Posterior cingulate gyrus (tissue), 11 donors: ENCODE measurements at regions of chr9 and their contacts with region 1.

Region 1: GRCh38 chr9:469672-470551 is 255.2 kb downstream of the DOCK8 start:
- DNase-seq: peak; percentile 47 to 96 (median 84)

Region 2: GRCh38 chr9:394347-395052 is 75.4 kb before region 1 on chr9:
- intact Hi-C with region 1: no loop called
- DNase-seq: no peak

Region 3: GRCh38 chr9:406886-407654 is 62.8 kb before region 1 on chr9:
- intact Hi-C with region 1: loop called (anchors 10 kb)
- DNase-seq: no peak

Region 4: DNA sequence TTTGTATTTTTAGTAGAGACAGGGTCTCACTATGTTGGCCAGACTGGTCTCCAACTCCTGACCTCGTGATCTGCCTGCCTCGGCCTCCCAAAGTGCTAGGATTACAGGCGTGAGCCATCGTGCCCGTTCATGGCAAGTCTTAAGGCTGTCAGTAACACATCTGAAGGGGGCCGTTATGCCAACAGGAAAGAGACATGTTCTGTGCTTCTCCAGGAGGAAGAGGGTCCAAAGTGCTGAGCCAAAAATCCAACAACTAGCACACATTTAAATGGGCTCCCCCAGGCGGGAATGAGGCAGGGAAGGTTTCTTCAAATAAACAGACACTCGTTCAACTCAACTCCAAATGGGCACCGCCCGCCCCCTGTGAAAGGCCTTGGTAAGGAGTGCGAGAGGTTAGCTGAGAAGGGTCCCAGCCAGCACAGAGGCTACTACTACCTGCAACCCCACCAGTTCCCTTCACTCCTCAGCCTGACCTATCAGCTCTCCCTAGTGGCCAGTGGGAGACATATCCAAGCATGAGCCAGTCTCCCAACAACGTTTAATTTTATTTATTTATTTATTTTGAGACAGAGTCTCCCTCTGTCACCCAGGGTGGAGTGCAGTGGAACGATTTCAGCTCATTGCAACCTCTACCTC is 287.5 kb after region 1 on chr9:
- intact Hi-C with region 1: loop called (anchors 10 kb)
- DNase-seq: peak in 1 of 10 donors; percentile 38